Lower leg skin (tissue), 4 donors: ENCODE measurements at regions of chr1 and their contacts with region 1.

Region 1: GRCh38 chr1:206112600-206113319 is 4.4 kb downstream of the AVPR1B start:
- DNase-seq: no peak
- H3K4me3 ChIP-seq: no peak overlapping the region
- CTCF ChIP-seq: no peak
- POLR2A ChIP-seq: no peak

Region 2: GRCh38 chr1:205919026-205919746 is 193.6 kb before region 1 on chr1:
- intact Hi-C with region 1: loop called (anchors 5 kb)
- DNase-seq: peak; percentile 78 to 95
- H3K4me3 ChIP-seq: no peak overlapping the region
- CTCF ChIP-seq: peak in 1 of 3 donors; percentile 71
- POLR2A ChIP-seq: no peak

Region 3: GRCh38 chr1:205983925-205984725 is 128.6 kb before region 1 on chr1:
- intact Hi-C with region 1: loop called (anchors 5 kb)
- DNase-seq: peak; percentile 66 to 92
- H3K4me3 ChIP-seq: no peak overlapping the region
- CTCF ChIP-seq: peak in 1 of 3 donors; percentile 62
- POLR2A ChIP-seq: no peak